Activated CD8-positive, alpha-beta T cell treated with anti-CD3 and anti-CD28 coated beads for 36 hours (primary cell): ENCODE measurements at regions of chrX and their contacts with region 1.

Region 1: DNA sequence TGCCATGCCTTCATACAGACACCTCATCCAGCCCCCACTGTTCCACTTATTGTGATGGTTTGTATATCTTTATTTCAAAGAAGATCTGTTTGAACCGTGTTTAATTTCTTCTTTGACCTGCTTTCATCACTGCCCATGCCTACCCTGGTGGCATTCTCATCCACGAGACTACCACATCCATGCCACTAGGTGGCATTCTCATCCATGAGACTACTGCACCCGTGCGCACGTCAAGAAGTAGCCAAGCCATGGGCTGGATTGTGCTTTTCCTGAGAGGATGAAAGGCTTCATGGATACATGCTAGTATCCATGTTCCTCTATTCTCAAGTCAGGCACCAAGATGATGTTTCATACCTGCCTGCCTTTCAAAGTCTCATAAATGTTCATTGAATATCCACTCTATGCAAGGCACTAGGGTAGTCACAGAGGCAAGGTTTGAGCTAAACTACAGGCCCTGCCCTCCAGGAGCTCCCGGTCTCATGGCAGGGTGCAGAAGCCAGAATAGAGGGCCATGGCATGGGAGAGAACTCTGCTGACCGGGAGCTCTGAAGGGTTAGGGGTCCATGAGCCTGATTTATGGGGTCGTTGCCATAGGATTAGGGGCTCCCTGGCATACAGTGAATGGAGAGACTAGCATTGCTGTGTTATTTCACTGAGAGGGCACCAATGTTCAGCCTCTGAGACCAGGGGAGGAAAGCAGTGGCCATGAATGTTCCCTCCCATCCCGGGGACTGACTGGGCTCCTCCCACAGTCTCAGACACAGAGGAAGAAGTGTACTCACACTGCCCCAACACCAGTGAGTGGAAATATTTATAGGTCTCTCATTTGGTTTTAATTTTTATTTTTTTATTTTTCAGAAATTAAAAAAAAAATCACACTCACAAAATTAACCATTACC is 24.8 kb upstream of the EOLA2 start:
- DNase-seq: peak; percentile 43
- ATAC-seq: peak; percentile 74
- H3K4me3 Mint-ChIP-seq: no peak overlapping the region
- H3K27ac Mint-ChIP-seq: no peak overlapping the region
- H3K4me1 Mint-ChIP-seq: peaks cover 5% of the 10 kb centered on the region
- H3K27me3 Mint-ChIP-seq: no peaks in the 10 kb centered on the region
- CTCF ChIP-seq: peak; percentile 32

Region 2: DNA sequence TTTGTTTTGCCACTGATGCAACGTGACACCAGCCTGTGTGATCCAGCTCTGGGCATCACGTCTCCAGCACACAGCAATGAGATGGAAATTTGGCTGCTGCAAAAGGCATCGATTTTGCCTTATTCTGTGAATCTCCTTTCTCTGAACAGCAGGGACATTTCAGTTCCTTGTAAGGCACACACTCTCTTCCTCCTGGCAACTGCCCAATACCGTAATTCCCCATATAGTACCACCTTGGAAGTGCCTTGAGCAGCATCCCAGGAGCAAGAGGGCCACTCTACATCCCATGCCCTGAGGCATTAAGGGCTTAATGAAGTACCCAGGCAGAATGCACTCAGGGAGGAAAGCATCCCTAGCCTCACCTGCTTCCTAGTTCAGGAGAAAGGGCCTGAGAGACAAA is 389.5 kb after region 1 on chrX:
- CTCF ChIA-PET with region 1: no interaction called
- POLR2A ChIA-PET with region 1: no interaction called
- intact Hi-C with region 1: loop called (anchors 10 kb)
- DNase-seq: no peak
- ATAC-seq: no peak
- H3K4me3 Mint-ChIP-seq: no peak overlapping the region
- H3K27ac Mint-ChIP-seq: no peak overlapping the region
- H3K4me1 Mint-ChIP-seq: no peaks in the 10 kb centered on the region
- H3K27me3 Mint-ChIP-seq: peaks cover 10% of the 10 kb centered on the region
- CTCF ChIP-seq: no peak

Region 3: DNA sequence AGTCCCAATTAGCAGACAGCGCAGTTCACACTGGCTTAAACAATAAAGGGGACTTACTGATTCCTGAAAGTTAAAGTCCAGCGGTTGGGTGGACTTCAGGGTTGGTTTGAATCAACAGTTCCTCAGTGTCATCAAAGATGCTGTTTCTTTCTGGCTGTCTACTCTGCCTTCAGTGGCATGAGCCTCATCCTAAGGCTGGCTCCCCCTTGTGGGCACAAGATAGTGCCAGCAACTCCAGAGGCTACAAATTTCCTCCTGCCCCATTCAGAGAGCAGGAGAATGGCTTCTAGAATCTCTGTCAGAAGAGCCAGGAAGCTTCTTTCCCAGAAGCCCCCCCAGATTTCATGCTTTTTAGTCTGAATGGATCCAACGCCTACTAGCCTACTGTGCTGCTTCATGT is 522.9 kb after region 1 on chrX:
- CTCF ChIA-PET with region 1: no interaction called
- POLR2A ChIA-PET with region 1: no interaction called
- intact Hi-C with region 1: loop called (anchors 10 kb)
- DNase-seq: peak; percentile 59
- ATAC-seq: peak; percentile 38
- H3K4me3 Mint-ChIP-seq: no peak overlapping the region
- H3K27ac Mint-ChIP-seq: no peak overlapping the region
- H3K4me1 Mint-ChIP-seq: peaks cover 24% of the 10 kb centered on the region
- H3K27me3 Mint-ChIP-seq: no peaks in the 10 kb centered on the region
- CTCF ChIP-seq: peak; percentile 33